ENCODE measurements at regions of chr11 and their contacts with region 1.

Region 1: DNA sequence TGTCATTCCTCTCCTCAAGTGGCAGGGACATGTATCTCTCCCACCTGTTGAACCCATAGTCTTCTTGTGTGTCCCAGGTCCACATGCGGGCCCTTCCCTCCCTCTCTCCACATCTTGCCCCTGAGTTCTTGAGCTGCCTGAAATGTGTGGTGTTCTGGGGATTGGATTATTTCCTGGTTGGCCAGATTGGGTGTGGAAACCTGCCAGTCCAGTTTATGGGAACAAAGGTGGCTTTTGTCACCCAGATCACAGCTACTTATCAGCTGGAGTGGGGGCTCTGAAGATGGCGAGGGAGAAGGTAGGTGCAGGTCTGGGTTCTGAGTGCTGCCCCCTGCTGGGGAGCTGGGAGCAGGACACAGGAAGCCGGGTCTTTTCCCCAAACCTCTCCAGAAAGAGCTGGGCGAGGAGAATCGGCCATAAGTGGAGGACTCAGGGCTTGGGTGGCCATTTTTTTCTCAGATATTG is 14.2 kb downstream of the DTX4 start:
- DNase-seq: peak; percentile 68
- ATAC-seq: peak; percentile 78
- H3K4me3 Mint-ChIP-seq: no peak overlapping the region
- H3K27ac Mint-ChIP-seq: no peak overlapping the region
- H3K4me1 Mint-ChIP-seq: peaks cover 16% of the 10 kb centered on the region
- H3K27me3 Mint-ChIP-seq: no peaks in the 10 kb centered on the region
- CTCF ChIP-seq: peak; percentile 65

Region 2: GRCh38 chr11:58999291-58999680 is 186.9 kb before region 1 on chr11:
- CTCF ChIA-PET with region 1: no interaction called
- POLR2A ChIA-PET with region 1: no interaction called
- DNase-seq: no peak
- ATAC-seq: no peak
- H3K4me3 Mint-ChIP-seq: no peak overlapping the region
- H3K27ac Mint-ChIP-seq: no peak overlapping the region
- H3K4me1 Mint-ChIP-seq: peaks cover 4% of the 10 kb centered on the region
- H3K27me3 Mint-ChIP-seq: no peaks in the 10 kb centered on the region
- CTCF ChIP-seq: no peak

Region 3: DNA sequence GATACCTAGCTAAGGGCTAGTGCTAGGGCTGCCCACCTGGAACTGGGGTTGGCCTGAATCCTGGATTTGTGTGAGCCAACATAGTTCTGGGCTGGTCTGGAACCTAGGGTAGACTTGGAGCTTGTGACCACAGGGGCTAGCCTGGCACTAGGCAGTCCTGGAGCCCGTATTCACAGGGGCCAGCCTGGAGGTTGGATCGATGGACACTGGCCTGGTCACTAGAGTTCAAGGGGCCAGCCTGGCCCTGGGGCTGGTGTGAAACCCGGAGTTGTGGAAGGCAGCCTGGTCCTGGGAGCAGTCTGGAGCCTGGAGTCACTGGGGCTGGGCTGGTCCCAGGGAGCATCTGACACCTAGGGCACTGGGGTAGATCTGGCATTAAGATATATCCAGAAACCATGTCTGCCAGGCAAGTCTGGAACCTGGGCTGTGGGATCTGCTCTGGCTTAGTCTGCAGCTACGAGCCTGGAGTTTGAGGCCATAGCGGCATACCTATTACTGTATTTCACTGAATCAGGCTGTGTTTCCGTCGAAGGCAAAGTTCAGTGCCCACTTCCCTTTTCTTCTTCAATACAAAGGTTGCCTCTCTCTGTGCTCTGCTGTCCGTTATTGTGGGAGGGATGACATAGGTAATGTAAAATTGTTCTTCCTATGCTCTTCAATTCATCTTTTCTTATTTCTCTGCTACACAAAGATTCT is 109.1 kb before region 1 on chr11:
- CTCF ChIA-PET with region 1: no interaction called
- POLR2A ChIA-PET with region 1: no interaction called
- DNase-seq: no peak
- ATAC-seq: no peak
- H3K4me3 Mint-ChIP-seq: no peak overlapping the region
- H3K27ac Mint-ChIP-seq: no peak overlapping the region
- H3K4me1 Mint-ChIP-seq: peaks cover 9% of the 10 kb centered on the region
- H3K27me3 Mint-ChIP-seq: peaks cover 3% of the 10 kb centered on the region
- CTCF ChIP-seq: no peak

Region 4: DNA sequence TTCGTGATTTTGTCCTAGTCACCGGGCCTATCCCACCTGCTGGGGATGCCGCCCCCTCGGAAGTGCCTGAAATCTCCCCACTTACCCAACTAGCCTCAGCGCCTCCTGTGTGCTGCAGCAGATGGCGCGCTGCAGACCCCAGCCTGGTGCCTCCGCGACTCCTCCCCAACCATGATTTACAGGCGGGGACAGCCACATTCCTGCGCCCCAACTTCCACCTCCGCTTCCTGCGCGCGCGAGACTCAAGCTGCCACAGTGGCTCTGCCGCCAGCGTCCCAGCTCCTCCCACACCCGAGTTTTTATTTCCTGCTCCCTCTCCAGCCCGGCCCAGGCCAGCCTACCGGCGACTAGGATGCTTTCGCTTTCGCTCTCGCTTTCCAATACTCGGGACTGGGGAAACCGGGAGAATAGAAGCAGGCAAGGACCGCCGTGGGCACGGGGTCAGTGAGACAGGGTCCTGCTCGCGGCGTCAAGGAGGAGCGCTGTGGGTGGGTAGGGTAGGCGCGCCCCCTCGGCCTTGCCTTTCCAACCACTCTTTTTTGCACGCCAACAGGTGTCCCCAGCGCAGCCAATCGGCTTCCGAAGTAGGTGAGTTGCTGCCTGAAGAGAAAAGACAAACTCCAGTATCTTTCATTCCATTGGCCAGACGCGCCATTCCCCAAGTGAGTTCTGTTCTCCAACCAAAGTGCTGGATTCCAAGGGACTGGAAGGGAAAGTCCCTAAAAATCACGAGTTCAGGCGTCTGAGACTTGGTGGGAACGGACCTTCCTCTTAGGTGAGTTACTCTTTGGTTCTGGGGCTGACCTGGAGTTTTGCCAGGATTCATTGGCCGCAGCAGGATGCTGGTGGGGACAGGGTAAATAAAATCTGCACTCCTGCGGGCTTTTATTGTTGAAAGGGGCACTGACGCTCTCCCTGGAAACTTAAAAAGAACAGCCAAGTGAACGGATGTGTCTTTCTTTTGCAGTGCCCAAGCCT is 43.3 kb before region 1 on chr11 and contains the start of gene FAM111A:
- CTCF ChIA-PET with region 1: interaction called, 10 read pairs
- POLR2A ChIA-PET with region 1: no interaction called
- DNase-seq: peak; percentile 81
- ATAC-seq: peak; percentile 80
- H3K4me3 Mint-ChIP-seq: peak within 1 kb of the TSS; percentile 86
- H3K27ac Mint-ChIP-seq: peak within 1 kb of the TSS; percentile 96
- H3K4me1 Mint-ChIP-seq: peaks cover 42% of the 10 kb centered on the region
- H3K27me3 Mint-ChIP-seq: peaks cover 13% of the 10 kb centered on the region
- CTCF ChIP-seq: no peak
- total RNA-seq, gene FAM111A: 18.8 to 24.4 TPM (median 22.0 TPM) in 3 replicates

Region 5: GRCh38 chr11:59199546-59200422 is 13.6 kb after region 1 on chr11:
- CTCF ChIA-PET with region 1: interaction called, 38 read pairs
- POLR2A ChIA-PET with region 1: no interaction called
- DNase-seq: no peak
- ATAC-seq: no peak
- H3K4me3 Mint-ChIP-seq: no peak overlapping the region
- H3K27ac Mint-ChIP-seq: no peak overlapping the region
- H3K4me1 Mint-ChIP-seq: no peaks in the 10 kb centered on the region
- H3K27me3 Mint-ChIP-seq: no peaks in the 10 kb centered on the region
- CTCF ChIP-seq: no peak

Region 6: DNA sequence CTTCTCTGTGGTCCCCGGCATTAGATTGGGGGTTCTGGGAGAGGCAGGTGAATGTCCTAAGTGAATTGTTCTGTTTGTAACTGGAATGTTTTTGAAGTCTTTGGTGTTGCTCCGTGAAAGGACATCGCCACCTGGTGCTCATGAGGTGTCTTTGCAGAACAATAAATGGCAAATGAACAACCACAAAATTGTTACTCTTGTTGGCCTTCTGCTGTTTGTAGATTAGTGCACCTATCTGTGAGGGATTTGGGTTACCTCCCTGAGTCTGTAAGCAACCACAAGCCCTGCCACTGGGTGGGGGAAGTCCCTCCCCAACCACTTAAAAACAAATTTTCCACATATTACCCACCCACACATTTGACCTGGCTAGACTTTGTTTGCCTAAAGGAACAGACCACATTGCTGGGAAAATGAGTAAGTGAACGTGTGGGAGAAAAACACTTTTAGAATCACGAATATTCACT is 21.9 kb after region 1 on chr11:
- CTCF ChIA-PET with region 1: interaction called, 38 read pairs
- POLR2A ChIA-PET with region 1: interaction called, 6 read pairs
- DNase-seq: peak; percentile 15
- ATAC-seq: peak; percentile 47
- H3K4me3 Mint-ChIP-seq: no peak overlapping the region
- H3K27ac Mint-ChIP-seq: 0 out of 2 replicates have a peak overlapping the region, but pooled peaks have one; percentile 76
- H3K4me1 Mint-ChIP-seq: peaks cover 6% of the 10 kb centered on the region
- H3K27me3 Mint-ChIP-seq: no peaks in the 10 kb centered on the region; the same call in 1 of the 2 replicates
- CTCF ChIP-seq: peak; percentile 53